Activated CD4-positive, alpha-beta T cell treated with anti-CD3 and anti-CD28 coated beads, Interleukin-2, amount 10 ng/mL, durations not matched to agents 24 days and 14 days (primary cell): ENCODE measurements at regions of chr10 and their contacts with region 1.

Region 1: GRCh38 chr10:60536529-60537114 is 146.9 kb upstream of the ANK3 start:
- DNase-seq: peak; percentile 64
- H3K4me3 Mint-ChIP-seq: peak overlapping the region; percentile 11
- H3K27ac Mint-ChIP-seq: peak overlapping the region; percentile 68
- H3K4me1 Mint-ChIP-seq: peaks cover 37% of the 10 kb centered on the region
- H3K27me3 Mint-ChIP-seq: no peaks in the 10 kb centered on the region

Region 2: DNA sequence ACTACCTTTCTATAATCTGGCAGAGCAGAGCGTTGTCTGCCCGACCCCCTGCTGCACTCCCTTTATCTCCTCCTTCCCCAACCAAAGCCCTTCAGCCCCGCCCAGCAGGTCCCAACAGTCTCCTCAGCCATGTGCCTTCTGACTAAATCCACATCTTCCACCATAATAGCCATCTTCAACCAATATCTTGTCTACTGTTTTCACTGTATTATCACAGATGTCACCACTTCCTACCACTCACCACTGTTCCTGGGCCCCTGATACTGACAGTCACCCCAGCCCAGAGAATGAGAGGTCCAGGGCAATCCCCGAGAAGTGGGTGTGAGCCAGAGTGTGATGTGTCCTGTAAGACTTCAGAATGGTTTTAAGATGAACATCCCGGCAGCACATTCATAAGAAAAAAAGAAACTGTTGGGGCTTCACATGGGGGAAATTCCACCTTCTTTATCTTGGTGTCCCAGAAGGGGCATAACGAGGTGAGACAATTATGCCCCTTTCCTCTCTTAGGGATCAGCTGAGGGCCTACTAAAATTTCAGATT is 655.6 kb before region 1 on chr10:
- intact Hi-C with region 1: loop called (anchors 2 kb)
- DNase-seq: peak; percentile 87
- H3K4me3 Mint-ChIP-seq: peak overlapping the region; percentile 69
- H3K27ac Mint-ChIP-seq: peak overlapping the region; percentile 92
- H3K4me1 Mint-ChIP-seq: peaks cover 74% of the 10 kb centered on the region
- H3K27me3 Mint-ChIP-seq: no peaks in the 10 kb centered on the region

Region 3: DNA sequence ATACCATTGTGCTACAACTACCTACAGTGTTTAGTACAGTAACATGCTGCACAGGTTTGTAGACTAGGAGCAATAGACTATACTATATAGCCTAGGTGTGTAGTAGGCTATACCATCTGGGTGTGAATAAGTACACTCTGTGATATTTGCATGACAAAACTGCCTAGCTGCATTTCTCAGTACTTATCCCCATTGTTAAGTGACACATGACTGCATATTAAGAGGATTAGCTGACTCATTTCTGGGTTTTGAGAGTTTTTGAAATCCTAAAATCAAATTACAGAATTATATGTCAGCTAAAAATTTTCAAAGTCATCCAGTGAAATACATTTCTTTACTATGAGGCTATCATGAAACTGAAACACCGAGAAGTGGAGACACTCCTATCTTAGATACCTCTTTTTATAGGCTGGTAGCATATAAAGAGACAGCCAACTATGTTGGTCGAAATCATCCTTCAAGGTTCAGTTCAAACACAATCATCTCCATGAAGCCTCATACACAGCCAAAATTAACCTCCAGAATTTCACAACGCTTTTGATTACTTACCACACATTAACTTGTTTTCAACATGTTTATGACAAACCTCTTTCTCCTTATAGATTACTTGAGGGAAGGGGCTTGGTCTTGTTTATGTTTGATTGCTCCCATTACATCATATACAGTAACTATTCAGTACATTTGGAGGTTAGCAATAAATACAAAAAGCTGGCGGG is 57.2 kb before region 1 on chr10:
- intact Hi-C with region 1: loop called (anchors 2 kb)
- DNase-seq: no peak
- H3K4me3 Mint-ChIP-seq: no peak overlapping the region
- H3K27ac Mint-ChIP-seq: no peak overlapping the region
- H3K4me1 Mint-ChIP-seq: peaks cover 3% of the 10 kb centered on the region
- H3K27me3 Mint-ChIP-seq: no peaks in the 10 kb centered on the region

Region 4: DNA sequence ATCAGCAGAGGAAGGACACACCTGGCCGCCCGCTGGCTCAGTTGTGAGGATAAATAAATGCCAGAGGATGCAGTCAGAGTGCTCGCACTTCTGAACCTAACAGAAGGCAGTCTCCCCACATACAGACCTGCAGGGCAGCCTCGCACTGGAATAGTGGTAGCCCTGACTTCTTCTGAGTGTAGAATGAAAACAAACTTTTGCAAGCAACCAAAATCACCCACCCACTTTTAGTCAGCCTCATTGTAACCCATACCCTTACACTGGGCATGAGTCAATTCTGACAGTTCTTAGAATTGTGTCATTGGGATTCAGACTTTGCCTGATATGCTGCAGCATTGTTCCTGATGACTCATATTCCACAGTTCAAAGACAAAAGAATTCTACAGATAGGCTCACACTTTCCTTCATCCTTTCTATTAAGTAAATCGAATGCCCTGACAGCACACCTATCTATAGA is 74.7 kb after region 1 on chr10:
- intact Hi-C with region 1: loop called (anchors 2 kb)
- DNase-seq: peak; percentile 61
- H3K4me3 Mint-ChIP-seq: no peak overlapping the region
- H3K27ac Mint-ChIP-seq: peak overlapping the region; percentile 78
- H3K4me1 Mint-ChIP-seq: peaks cover 19% of the 10 kb centered on the region
- H3K27me3 Mint-ChIP-seq: no peaks in the 10 kb centered on the region

Region 5: DNA sequence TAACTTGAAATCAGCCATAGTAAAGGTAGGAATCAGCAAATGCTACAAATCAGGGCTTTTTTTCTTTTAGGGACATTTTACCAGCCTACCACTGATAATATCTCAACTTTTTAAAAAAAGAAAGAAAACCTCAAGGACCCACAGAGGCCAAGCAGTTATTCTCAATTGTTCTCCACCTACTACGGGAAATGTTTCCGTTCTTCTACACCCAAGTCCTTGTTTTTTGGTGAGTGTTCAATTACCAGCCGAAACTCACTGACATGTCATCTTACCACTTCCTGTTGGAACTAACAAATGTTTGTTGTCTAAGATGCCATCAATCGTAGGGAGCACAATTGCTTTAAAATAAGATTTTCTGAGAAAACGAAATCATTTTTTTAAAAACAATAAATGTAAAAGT is 191.4 kb after region 1 on chr10:
- intact Hi-C with region 1: loop called (anchors 5 kb)
- DNase-seq: peak; percentile 87
- H3K4me3 Mint-ChIP-seq: peak overlapping the region; percentile 84
- H3K27ac Mint-ChIP-seq: peak overlapping the region; percentile 88
- H3K4me1 Mint-ChIP-seq: peaks cover 71% of the 10 kb centered on the region
- H3K27me3 Mint-ChIP-seq: no peaks in the 10 kb centered on the region

Region 6: GRCh38 chr10:60778214-60779029 is 241.8 kb after region 1 on chr10 and contains the start of gene CDK1:
- intact Hi-C with region 1: loop called (anchors 5 kb)
- DNase-seq: peak; percentile 99
- H3K4me3 Mint-ChIP-seq: peak within 1 kb of the TSS; percentile 99
- H3K27ac Mint-ChIP-seq: peak within 1 kb of the TSS; percentile 99
- H3K4me1 Mint-ChIP-seq: peaks cover 32% of the 10 kb centered on the region
- H3K27me3 Mint-ChIP-seq: peaks cover 2% of the 10 kb centered on the region
- total RNA-seq, gene CDK1: 101 and 105 TPM in 2 replicates

Region 7: GRCh38 chr10:61492364-61492995 is 955.9 kb after region 1 on chr10:
- intact Hi-C with region 1: no loop called
- DNase-seq: no peak
- H3K4me3 Mint-ChIP-seq: no peak overlapping the region
- H3K27ac Mint-ChIP-seq: no peak overlapping the region
- H3K4me1 Mint-ChIP-seq: no peaks in the 10 kb centered on the region
- H3K27me3 Mint-ChIP-seq: no peaks in the 10 kb centered on the region